HepG2 (cell line): ENCODE measurements at regions of chr2 and their contacts with region 1.

Region 1: GRCh38 chr2:43086451-43087221 is 139.8 kb downstream of the ZFP36L2 start:
- DNase-seq: peak; percentile 50
- ATAC-seq: no peak
- H3K4me3 ChIP-seq: no peak overlapping the region
- H3K27ac ChIP-seq: no peak overlapping the region
- H3K4me1 ChIP-seq: peaks cover 74% of the 10 kb centered on the region
- H3K27me3 ChIP-seq: no peaks in the 10 kb centered on the region
- CTCF ChIP-seq: no peak
- EP300 ChIP-seq: no peak
- POLR2A ChIP-seq: no peak
- RAD21 ChIP-seq: no peak

Region 2: GRCh38 chr2:43075054-43075593 is 11.5 kb before region 1 on chr2:
- CTCF ChIA-PET with region 1: no interaction called
- POLR2A ChIA-PET with region 1: interaction called, 4 read pairs
- in situ Hi-C with region 1: no loop called
- intact Hi-C with region 1: loop called (anchors 2 kb)
- DNase-seq: peak; percentile 76
- ATAC-seq: peak; percentile 7; the same call in 1 of the 3 replicates
- H3K4me3 ChIP-seq: no peak overlapping the region
- H3K27ac ChIP-seq: no peak overlapping the region
- H3K4me1 ChIP-seq: peaks cover 60% of the 10 kb centered on the region
- H3K27me3 ChIP-seq: no peaks in the 10 kb centered on the region
- CTCF ChIP-seq: no peak
- EP300 ChIP-seq: peak in 1 of 2 experiments; percentile 36; a peak in 1 of 4 replicates
- POLR2A ChIP-seq: no peak
- RAD21 ChIP-seq: no peak